SK-N-SH (cell line): ENCODE measurements at regions of chr22 and their contacts with region 1.

Region 1: GRCh38 chr22:20238536-20238900 is 29.6 kb downstream of the RTN4R start:
- DNase-seq: peak; percentile 89
- H3K4me3 ChIP-seq: no peak overlapping the region
- H3K27ac ChIP-seq: no peak overlapping the region
- H3K4me1 ChIP-seq: peaks cover 0 to 30% of the 10 kb centered on the region in 2 experiments; a peak in 1 of 4 replicates
- H3K27me3 ChIP-seq: no peaks in the 10 kb centered on the region
- CTCF ChIP-seq: peak; percentile 43
- EP300 ChIP-seq: no peak
- RAD21 ChIP-seq: peak; percentile 67

Region 2: GRCh38 chr22:20203142-20204039 is 35.1 kb before region 1 on chr22:
- CTCF ChIA-PET with region 1: no interaction called
- POLR2A ChIA-PET with region 1: no interaction called
- DNase-seq: peak; percentile 62
- H3K4me3 ChIP-seq: no peak overlapping the region
- H3K27ac ChIP-seq: no peak overlapping the region
- H3K4me1 ChIP-seq: peaks cover 0 to 19% of the 10 kb centered on the region in 2 experiments; a peak in 1 of 4 replicates
- H3K27me3 ChIP-seq: peaks cover 11% of the 10 kb centered on the region; the same call in 1 of the 2 replicates
- CTCF ChIP-seq: no peak
- EP300 ChIP-seq: no peak
- RAD21 ChIP-seq: no peak

Region 3: GRCh38 chr22:20258584-20259326 is 20.2 kb after region 1 on chr22:
- CTCF ChIA-PET with region 1: interaction called, 22 read pairs
- POLR2A ChIA-PET with region 1: no interaction called
- DNase-seq: peak; percentile 50
- H3K4me3 ChIP-seq: no peak overlapping the region
- H3K27ac ChIP-seq: no peak overlapping the region
- H3K4me1 ChIP-seq: peaks cover 0 to 18% of the 10 kb centered on the region in 2 experiments; a peak in 1 of 4 replicates
- H3K27me3 ChIP-seq: no peaks in the 10 kb centered on the region
- CTCF ChIP-seq: peak; percentile 41
- EP300 ChIP-seq: no peak
- RAD21 ChIP-seq: no peak